Activated T-helper 2 cell treated with anti-CD3 and anti-CD28 coated beads, Interferon-gamma antibody, Interleukin-2, Interleukin-4, amounts not matched to agents 10 μg/mL and 5 μg/mL and 100 μg/mL, durations not matched to agents 14 hours and 24 hours and 36 hours (primary cell): ENCODE measurements at regions of chr22 and their contacts with region 1.

Region 1: DNA sequence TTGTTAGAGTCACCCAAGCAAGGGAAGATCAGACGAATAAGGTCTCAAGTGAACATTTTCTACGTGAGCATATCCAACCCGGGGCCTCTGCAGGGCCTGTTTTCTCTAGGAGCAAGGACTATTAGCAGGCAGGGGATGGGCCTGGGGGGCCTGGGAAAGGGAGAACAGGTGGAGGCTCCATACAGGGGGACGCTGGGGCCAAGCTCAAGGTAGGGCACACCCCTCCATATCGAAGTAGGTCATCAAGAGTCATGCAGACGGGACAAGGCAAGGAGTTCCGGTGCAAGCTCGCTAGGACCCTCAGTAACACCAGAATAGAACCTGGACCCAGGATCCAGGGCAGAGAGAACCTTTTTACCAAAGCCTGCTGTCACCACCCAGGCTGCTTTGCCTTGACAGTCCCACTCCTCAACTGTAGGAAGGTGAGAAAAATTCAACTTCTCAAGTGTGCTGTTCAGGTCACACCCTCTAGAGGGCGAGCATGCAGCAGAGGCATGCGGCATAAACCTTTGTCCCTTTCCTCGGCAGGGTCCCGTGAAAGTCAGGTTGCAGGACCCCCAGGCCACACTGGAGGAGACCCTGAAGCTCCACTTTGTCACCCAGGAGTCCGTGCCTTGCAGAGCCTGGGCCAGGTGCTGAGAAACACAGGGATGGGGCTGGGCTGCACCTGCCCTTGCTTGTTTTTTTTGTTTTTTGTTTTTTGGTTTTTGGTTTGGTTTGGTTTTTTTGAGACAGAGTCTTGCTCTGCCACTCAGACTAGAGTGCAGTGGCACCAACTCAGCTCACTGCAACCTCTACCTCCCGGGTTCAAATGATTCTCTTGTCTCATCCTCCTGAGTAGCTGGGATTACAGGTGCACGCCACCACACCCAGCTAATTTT is 8.6 kb upstream of the APOBEC3B start:
- DNase-seq: peak; percentile 40
- H3K4me3 Mint-ChIP-seq: no peak overlapping the region
- H3K27ac Mint-ChIP-seq: no peak overlapping the region
- H3K4me1 Mint-ChIP-seq: peaks cover 4% of the 10 kb centered on the region
- H3K27me3 Mint-ChIP-seq: peaks cover 19% of the 10 kb centered on the region

Region 2: DNA sequence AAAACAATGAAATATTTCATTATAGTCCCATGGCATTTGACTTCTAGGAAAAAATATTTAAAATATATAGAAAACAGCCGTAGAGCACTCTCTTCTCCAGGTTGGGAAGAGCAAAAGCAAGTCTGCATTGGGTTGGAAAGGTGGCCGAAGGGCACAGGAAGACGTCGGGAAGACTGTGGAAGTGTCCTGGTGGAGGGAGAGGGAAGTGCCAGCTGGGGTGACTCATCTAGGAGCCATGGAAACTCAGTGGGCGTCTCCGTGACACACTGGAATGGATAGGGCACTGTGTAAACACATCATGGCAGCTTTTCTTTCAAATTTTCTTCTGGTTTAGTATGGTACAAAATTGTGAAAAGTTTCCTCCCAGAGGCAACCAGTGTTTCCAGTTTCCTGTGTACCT is 255.1 kb before region 1 on chr22:
- intact Hi-C with region 1: no loop called
- DNase-seq: no peak
- H3K4me3 Mint-ChIP-seq: no peak overlapping the region
- H3K27ac Mint-ChIP-seq: no peak overlapping the region
- H3K4me1 Mint-ChIP-seq: peaks cover 10% of the 10 kb centered on the region
- H3K27me3 Mint-ChIP-seq: no peaks in the 10 kb centered on the region

Region 3: DNA sequence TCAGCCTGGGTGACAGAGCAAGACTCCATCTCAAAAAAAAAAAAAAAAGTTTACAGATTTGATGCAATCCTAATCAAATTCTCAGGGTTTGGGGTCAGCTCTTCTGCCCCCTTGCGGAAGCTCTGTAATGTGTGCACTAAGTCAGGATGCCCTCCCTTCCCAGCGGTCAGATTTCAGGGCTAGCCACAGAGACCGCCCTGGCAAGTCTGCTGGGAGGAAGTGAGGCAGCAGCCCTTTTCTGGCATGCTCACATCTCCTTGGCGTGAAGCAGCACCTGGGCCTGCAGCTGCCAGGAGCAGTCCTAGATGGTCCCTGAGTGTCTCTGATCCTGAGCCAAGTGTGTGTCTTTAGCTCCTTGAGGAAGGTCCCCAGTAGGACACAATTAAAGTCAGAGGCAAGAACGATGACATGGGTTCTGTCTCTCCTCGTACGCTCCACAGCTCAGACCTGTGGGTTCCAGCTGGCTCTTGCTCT is 29.7 kb after region 1 on chr22:
- intact Hi-C with region 1: loop called (anchors 1 kb)
- DNase-seq: peak; percentile 66
- H3K4me3 Mint-ChIP-seq: no peak overlapping the region
- H3K27ac Mint-ChIP-seq: no peak overlapping the region
- H3K4me1 Mint-ChIP-seq: peaks cover 5% of the 10 kb centered on the region
- H3K27me3 Mint-ChIP-seq: peaks cover 10% of the 10 kb centered on the region

Region 4: GRCh38 chr22:39087881-39088684 is 114.6 kb after region 1 on chr22:
- intact Hi-C with region 1: no loop called
- DNase-seq: no peak
- H3K4me3 Mint-ChIP-seq: no peak overlapping the region
- H3K27ac Mint-ChIP-seq: peak overlapping the region; percentile 61
- H3K4me1 Mint-ChIP-seq: peaks cover 59% of the 10 kb centered on the region
- H3K27me3 Mint-ChIP-seq: no peaks in the 10 kb centered on the region